Endothelial cell of umbilical vein (primary cell): ENCODE measurements at regions of chr7 and their contacts with region 1.

Region 1: GRCh38 chr7:76262683-76263402 is 39.6 kb upstream of the HSPB1 start:
- DNase-seq: peak; percentile 48
- H3K4me3 ChIP-seq: no peak overlapping the region
- H3K27ac ChIP-seq: no peak overlapping the region
- H3K4me1 ChIP-seq: peaks cover 4% of the 10 kb centered on the region
- H3K27me3 ChIP-seq: peaks cover 12 to 14% of the 10 kb centered on the region in 2 experiments
- CTCF ChIP-seq: peak; percentile 70 to 80
- POLR2A ChIP-seq: no peak

Region 2: GRCh38 chr7:76069238-76069638 is 193.6 kb before region 1 on chr7:
- CTCF ChIA-PET with region 1: interaction called, 15 read pairs
- POLR2A ChIA-PET with region 1: no interaction called
- dilution Hi-C with region 1: no loop called
- intact Hi-C with region 1: no loop called
- DNase-seq: peak; percentile 61
- H3K4me3 ChIP-seq: no peak overlapping the region
- H3K27ac ChIP-seq: no peak overlapping the region
- H3K4me1 ChIP-seq: no peaks in the 10 kb centered on the region
- H3K27me3 ChIP-seq: no peaks in the 10 kb centered on the region
- CTCF ChIP-seq: peak; percentile 9 to 20
- POLR2A ChIP-seq: no peak

Region 3: DNA sequence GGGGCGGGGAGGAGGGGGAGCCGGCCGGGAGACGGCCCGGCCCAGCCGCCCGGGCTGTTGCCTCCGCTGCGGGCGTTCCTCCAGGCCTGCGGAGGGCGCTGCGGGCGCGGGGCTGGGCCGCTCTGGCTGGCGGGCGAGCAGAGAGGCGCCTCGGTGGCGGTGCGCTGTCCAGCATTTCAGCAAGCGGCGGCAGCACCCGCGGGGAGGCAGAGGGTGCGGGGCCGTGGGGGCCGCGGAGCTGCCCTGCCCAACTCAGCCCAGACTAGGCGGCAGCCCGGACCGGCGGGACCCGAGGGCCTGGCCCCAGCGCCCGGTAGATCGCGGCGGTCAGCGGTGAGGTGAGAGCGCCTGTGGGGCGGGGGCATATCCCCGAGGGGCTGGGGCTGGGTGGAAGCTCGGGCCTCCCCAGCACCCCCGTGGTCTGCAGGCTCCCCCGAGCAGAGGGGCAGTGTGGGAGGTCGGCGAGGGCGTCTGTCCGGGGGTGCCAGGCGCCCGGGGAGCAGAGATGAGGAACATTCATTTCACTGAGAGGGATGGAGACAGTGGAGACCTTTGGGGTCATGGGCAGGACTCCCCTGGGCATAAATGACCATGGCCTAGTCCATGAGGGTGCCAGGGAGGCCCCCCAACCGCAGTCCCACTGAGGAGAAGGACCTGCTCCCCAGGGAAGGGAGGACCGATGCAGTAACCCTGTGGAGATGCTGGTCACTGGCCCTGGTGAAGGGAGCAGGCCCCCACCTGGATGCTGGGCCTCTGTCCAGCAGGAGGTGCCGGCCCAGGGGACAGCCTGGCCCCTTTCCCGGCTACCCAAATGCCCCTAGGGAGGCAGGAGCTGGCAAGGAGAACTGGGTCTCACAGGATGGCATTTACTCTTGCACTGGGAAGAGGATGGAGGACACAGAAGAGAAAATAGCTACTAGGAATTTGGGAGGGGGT is 60.8 kb before region 1 on chr7 and contains the start of gene SRRM3:
- CTCF ChIA-PET with region 1: interaction called, 13 read pairs
- POLR2A ChIA-PET with region 1: no interaction called
- dilution Hi-C with region 1: no loop called
- intact Hi-C with region 1: no loop called
- DNase-seq: peak; percentile 49
- H3K4me3 ChIP-seq: no peak within 1 kb of the TSS
- H3K27ac ChIP-seq: no peak within 1 kb of the TSS
- H3K4me1 ChIP-seq: no peaks in the 10 kb centered on the region
- H3K27me3 ChIP-seq: no peaks in the 10 kb centered on the region
- CTCF ChIP-seq: peak; percentile 57 to 78
- POLR2A ChIP-seq: no peak
- total RNA-seq, gene SRRM3: 4.8 and 5.4 TPM in 2 replicates

Region 4: GRCh38 chr7:76234931-76235441 is 27.9 kb before region 1 on chr7:
- CTCF ChIA-PET with region 1: interaction called, 14 read pairs
- POLR2A ChIA-PET with region 1: no interaction called
- dilution Hi-C with region 1: no loop called
- intact Hi-C with region 1: loop called (anchors 1 kb)
- DNase-seq: peak; percentile 81
- H3K4me3 ChIP-seq: peak overlapping the region in 1 of 3 experiments; percentile 3
- H3K27ac ChIP-seq: no peak overlapping the region
- H3K4me1 ChIP-seq: no peaks in the 10 kb centered on the region
- H3K27me3 ChIP-seq: peaks cover 0 to 6% of the 10 kb centered on the region in 2 experiments
- CTCF ChIP-seq: no peak
- POLR2A ChIP-seq: no peak

Region 5: GRCh38 chr7:76282344-76283253 is 19.8 kb after region 1 on chr7:
- CTCF ChIA-PET with region 1: interaction called, 17 read pairs
- POLR2A ChIA-PET with region 1: interaction called, 5 read pairs
- dilution Hi-C with region 1: no loop called
- intact Hi-C with region 1: no loop called
- DNase-seq: no peak
- H3K4me3 ChIP-seq: peak overlapping the region in 2 of 3 experiments; percentile 29 to 42
- H3K27ac ChIP-seq: no peak overlapping the region
- H3K4me1 ChIP-seq: no peaks in the 10 kb centered on the region
- H3K27me3 ChIP-seq: peaks cover 14 to 23% of the 10 kb centered on the region in 2 experiments
- CTCF ChIP-seq: no peak
- POLR2A ChIP-seq: no peak

Region 6: DNA sequence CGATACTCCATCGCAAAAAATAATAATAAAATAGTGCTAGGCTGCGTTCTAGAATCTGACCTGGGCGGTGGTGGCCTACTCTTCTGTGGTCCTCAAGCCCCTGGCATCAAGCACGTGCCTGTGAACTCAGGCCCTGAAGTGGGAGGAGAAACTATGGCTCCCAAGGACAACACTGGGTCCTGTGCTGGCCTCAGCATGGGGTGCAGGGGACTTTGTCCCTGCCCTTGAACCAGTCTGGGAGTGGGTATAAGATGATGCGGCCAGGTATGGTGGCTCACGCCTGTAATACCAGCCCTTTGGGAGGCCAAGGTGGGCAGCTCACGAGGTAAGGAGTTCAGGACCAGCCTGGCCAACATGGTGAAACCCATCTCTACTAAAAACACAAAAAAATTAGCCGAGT is 167.4 kb after region 1 on chr7:
- CTCF ChIA-PET with region 1: no interaction called
- POLR2A ChIA-PET with region 1: no interaction called
- dilution Hi-C with region 1: no loop called
- intact Hi-C with region 1: no loop called
- DNase-seq: no peak
- H3K4me3 ChIP-seq: no peak overlapping the region
- H3K27ac ChIP-seq: no peak overlapping the region
- H3K4me1 ChIP-seq: peaks cover 9% of the 10 kb centered on the region
- H3K27me3 ChIP-seq: no peaks in the 10 kb centered on the region
- CTCF ChIP-seq: no peak
- POLR2A ChIP-seq: no peak